CD8-positive, alpha-beta T cell (primary cell): ENCODE measurements at regions of chr2 and their contacts with region 1.

Region 1: DNA sequence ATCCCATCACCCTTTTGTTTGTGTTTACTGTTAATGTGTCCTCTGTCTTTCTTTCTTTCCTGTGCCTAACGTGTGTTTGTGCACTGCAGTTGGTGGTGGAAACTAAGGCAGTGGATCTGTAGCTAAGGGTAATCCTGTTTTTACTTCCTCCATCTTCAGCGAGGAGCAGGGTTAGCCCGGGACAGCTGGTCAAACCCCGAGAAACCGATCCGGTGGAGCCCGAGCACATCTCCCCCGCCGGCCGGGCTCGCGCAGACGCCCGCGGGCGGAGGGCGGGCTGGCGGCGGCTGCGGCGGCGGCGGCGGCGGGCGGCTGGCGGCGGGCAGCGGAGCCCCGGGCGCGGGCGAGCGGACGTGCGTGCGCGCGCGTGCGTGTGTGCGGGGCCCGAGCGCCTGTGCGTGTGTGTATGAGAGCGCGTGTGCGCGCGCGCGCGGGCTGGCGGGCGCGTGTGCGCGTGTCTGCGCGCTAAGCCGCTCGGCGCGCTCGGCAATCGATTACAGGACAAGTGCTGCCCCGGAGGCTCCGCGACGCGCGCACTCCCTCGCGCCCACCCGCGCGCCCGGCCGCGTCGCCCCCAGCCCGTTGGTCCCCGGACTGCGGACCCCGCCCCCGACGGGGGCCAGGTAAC is at the start of gene IKZF2:
- DNase-seq: peak; percentile 35 to 93 (median 75)
- ATAC-seq: peak; percentile 66
- H3K4me3 ChIP-seq: peak within 1 kb of the TSS; percentile 66 to 67
- H3K4me3 Mint-ChIP-seq: peak within 1 kb of the TSS; percentile 90
- H3K27ac ChIP-seq: peak within 1 kb of the TSS; percentile 65 to 82
- H3K27ac Mint-ChIP-seq: peak within 1 kb of the TSS; percentile 91
- H3K4me1 ChIP-seq: peaks cover 12% of the 10 kb centered on the region
- H3K4me1 Mint-ChIP-seq: peaks cover 52% of the 10 kb centered on the region
- H3K27me3 ChIP-seq: no peaks in the 10 kb centered on the region
- H3K27me3 Mint-ChIP-seq: no peaks in the 10 kb centered on the region
- CTCF ChIP-seq: no peak
- total RNA-seq, gene IKZF2: 11.2 to 14.6 TPM

Region 2: GRCh38 chr2:212686285-212686895 is 465.2 kb before region 1 on chr2:
- CTCF ChIA-PET with region 1: interaction called, 14 read pairs
- POLR2A ChIA-PET with region 1: no interaction called
- intact Hi-C with region 1: loop called in 1 of 2 experiments (anchors 1 kb)
- DNase-seq: peak; percentile 16 to 70 (median 54)
- ATAC-seq: peak; percentile 42
- H3K4me3 ChIP-seq: no peak overlapping the region
- H3K4me3 Mint-ChIP-seq: no peak overlapping the region
- H3K27ac ChIP-seq: no peak overlapping the region
- H3K27ac Mint-ChIP-seq: no peak overlapping the region
- H3K4me1 ChIP-seq: no peaks in the 10 kb centered on the region
- H3K4me1 Mint-ChIP-seq: peaks cover 2% of the 10 kb centered on the region
- H3K27me3 ChIP-seq: no peaks in the 10 kb centered on the region
- H3K27me3 Mint-ChIP-seq: no peaks in the 10 kb centered on the region
- CTCF ChIP-seq: peak; percentile 93

Region 3: GRCh38 chr2:212863185-212863588 is 288.4 kb before region 1 on chr2:
- CTCF ChIA-PET with region 1: no interaction called
- POLR2A ChIA-PET with region 1: no interaction called
- intact Hi-C with region 1: loop called (anchors 1 to 10 kb)
- DNase-seq: peak in 3 of 9 experiments; percentile 11 to 26 (median 15)
- ATAC-seq: no peak
- H3K4me3 ChIP-seq: no peak overlapping the region
- H3K4me3 Mint-ChIP-seq: no peak overlapping the region
- H3K27ac ChIP-seq: no peak overlapping the region
- H3K27ac Mint-ChIP-seq: no peak overlapping the region
- H3K4me1 ChIP-seq: no peaks in the 10 kb centered on the region
- H3K4me1 Mint-ChIP-seq: no peaks in the 10 kb centered on the region
- H3K27me3 ChIP-seq: no peaks in the 10 kb centered on the region
- H3K27me3 Mint-ChIP-seq: no peaks in the 10 kb centered on the region
- CTCF ChIP-seq: peak; percentile 30

Region 4: DNA sequence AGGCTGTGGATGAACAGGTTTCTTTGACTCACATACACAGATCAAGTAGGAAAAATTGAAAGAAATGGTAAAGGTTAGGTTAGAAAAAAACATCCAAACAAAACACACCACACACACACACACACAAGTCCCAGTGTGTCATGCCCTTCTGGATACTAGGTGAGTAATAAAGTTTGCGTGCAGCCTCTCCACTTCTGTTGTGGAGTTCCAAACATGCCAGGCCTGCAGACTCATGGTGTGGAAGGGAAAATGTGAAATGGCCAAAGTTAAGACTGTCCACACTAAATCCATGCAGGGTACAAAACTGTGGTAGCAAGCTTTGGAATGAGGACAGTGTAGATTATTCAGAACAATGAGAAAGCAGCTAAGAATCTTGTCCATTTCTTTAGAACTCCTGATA is 114.7 kb before region 1 on chr2:
- CTCF ChIA-PET with region 1: interaction called, 6 read pairs
- POLR2A ChIA-PET with region 1: interaction called, 5 read pairs
- intact Hi-C with region 1: loop called in 1 of 2 experiments (anchors 5 kb)
- DNase-seq: no peak
- ATAC-seq: no peak
- H3K4me3 ChIP-seq: no peak overlapping the region
- H3K4me3 Mint-ChIP-seq: no peak overlapping the region
- H3K27ac ChIP-seq: peak overlapping the region in 1 of 2 experiments; percentile 34
- H3K27ac Mint-ChIP-seq: peak overlapping the region; percentile 22
- H3K4me1 ChIP-seq: no peaks in the 10 kb centered on the region
- H3K4me1 Mint-ChIP-seq: peaks cover 45% of the 10 kb centered on the region
- H3K27me3 ChIP-seq: no peaks in the 10 kb centered on the region
- H3K27me3 Mint-ChIP-seq: no peaks in the 10 kb centered on the region
- CTCF ChIP-seq: no peak

Region 5: GRCh38 chr2:213119061-213119856 is 32.3 kb before region 1 on chr2:
- CTCF ChIA-PET with region 1: interaction called, 4 read pairs
- POLR2A ChIA-PET with region 1: interaction called, 11 read pairs
- intact Hi-C with region 1: no loop called
- DNase-seq: peak in 4 of 9 experiments; percentile 28 to 70 (median 57)
- ATAC-seq: peak; percentile 79
- H3K4me3 ChIP-seq: no peak overlapping the region
- H3K4me3 Mint-ChIP-seq: peak overlapping the region; percentile 53
- H3K27ac ChIP-seq: peak overlapping the region in 1 of 2 experiments; percentile 59
- H3K27ac Mint-ChIP-seq: peak overlapping the region; percentile 91
- H3K4me1 ChIP-seq: peaks cover 28% of the 10 kb centered on the region
- H3K4me1 Mint-ChIP-seq: peaks cover 65% of the 10 kb centered on the region
- H3K27me3 ChIP-seq: no peaks in the 10 kb centered on the region
- H3K27me3 Mint-ChIP-seq: no peaks in the 10 kb centered on the region
- CTCF ChIP-seq: no peak

Region 6: GRCh38 chr2:213238753-213239495 is 87.4 kb after region 1 on chr2:
- CTCF ChIA-PET with region 1: interaction called, 3 read pairs
- POLR2A ChIA-PET with region 1: no interaction called
- intact Hi-C with region 1: loop called (anchors 2 to 5 kb)
- DNase-seq: peak in 2 of 9 experiments; percentile 11 to 56
- ATAC-seq: peak; percentile 64
- H3K4me3 ChIP-seq: no peak overlapping the region
- H3K4me3 Mint-ChIP-seq: peak overlapping the region; percentile 65
- H3K27ac ChIP-seq: peak overlapping the region in 1 of 2 experiments; percentile 39
- H3K27ac Mint-ChIP-seq: peak overlapping the region; percentile 76
- H3K4me1 ChIP-seq: no peaks in the 10 kb centered on the region
- H3K4me1 Mint-ChIP-seq: peaks cover 43% of the 10 kb centered on the region
- H3K27me3 ChIP-seq: no peaks in the 10 kb centered on the region
- H3K27me3 Mint-ChIP-seq: peaks cover 8% of the 10 kb centered on the region
- CTCF ChIP-seq: no peak

Region 7: GRCh38 chr2:214809751-214810564 is 1658.4 kb after region 1 on chr2:
- CTCF ChIA-PET with region 1: no interaction called
- POLR2A ChIA-PET with region 1: no interaction called
- intact Hi-C with region 1: loop called (anchors 5 to 10 kb)
- DNase-seq: peak; percentile 90 to 98 (median 97)
- ATAC-seq: peak; percentile 79
- H3K4me3 ChIP-seq: peak overlapping the region; percentile 88 to 98
- H3K4me3 Mint-ChIP-seq: peak overlapping the region; percentile 99
- H3K27ac ChIP-seq: peak overlapping the region; percentile 50 to 78
- H3K27ac Mint-ChIP-seq: peak overlapping the region; percentile 72
- H3K4me1 ChIP-seq: peaks cover 17% of the 10 kb centered on the region
- H3K4me1 Mint-ChIP-seq: peaks cover 33% of the 10 kb centered on the region
- H3K27me3 ChIP-seq: no peaks in the 10 kb centered on the region
- H3K27me3 Mint-ChIP-seq: no peaks in the 10 kb centered on the region
- CTCF ChIP-seq: no peak